ENCODE measurements at regions of chr4 and their contacts with region 1.

Region 1: GRCh38 chr4:169024762-169025161 is 14.7 kb upstream of the CBR4 start:
- DNase-seq: peak; percentile 21 to 43
- ATAC-seq: peak; percentile 90
- H3K4me3 ChIP-seq: no peak overlapping the region
- H3K27ac ChIP-seq: peak overlapping the region in 1 of 2 experiments; percentile 58; a peak in 2 of 6 replicates
- H3K4me1 ChIP-seq: no peaks in the 10 kb centered on the region; the same call in 2 of the 3 replicates
- CTCF ChIP-seq: peak; percentile 64
- EP300 ChIP-seq: no peak
- POLR2A ChIP-seq: no peak
- RAD21 ChIP-seq: peak; percentile 79 to 81

Region 2: DNA sequence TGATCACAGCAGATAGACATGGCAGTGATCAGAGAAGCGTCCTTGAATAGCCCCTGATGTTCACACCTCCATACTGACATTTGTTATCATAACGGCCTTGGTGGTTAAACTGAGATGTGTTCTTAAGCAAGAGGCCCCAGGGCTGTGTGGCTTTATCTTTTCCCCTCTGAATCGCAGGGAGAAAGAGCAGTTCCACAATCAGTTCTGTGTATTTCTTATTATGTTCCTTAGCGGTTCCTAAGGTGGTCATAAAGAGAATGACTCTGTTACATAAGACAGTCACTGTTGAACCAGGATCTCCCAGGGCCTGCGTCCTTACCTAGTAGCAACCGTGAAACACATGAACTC is 38.1 kb after region 1 on chr4:
- CTCF ChIA-PET with region 1: no interaction called
- POLR2A ChIA-PET with region 1: no interaction called
- DNase-seq: no peak
- ATAC-seq: no peak
- H3K4me3 ChIP-seq: no peak overlapping the region
- H3K27ac ChIP-seq: peak overlapping the region in 1 of 2 experiments; percentile 37; a peak in 1 of 6 replicates
- H3K4me1 ChIP-seq: peaks cover 15% of the 10 kb centered on the region
- CTCF ChIP-seq: no peak
- EP300 ChIP-seq: no peak
- POLR2A ChIP-seq: no peak
- RAD21 ChIP-seq: no peak

Region 3: DNA sequence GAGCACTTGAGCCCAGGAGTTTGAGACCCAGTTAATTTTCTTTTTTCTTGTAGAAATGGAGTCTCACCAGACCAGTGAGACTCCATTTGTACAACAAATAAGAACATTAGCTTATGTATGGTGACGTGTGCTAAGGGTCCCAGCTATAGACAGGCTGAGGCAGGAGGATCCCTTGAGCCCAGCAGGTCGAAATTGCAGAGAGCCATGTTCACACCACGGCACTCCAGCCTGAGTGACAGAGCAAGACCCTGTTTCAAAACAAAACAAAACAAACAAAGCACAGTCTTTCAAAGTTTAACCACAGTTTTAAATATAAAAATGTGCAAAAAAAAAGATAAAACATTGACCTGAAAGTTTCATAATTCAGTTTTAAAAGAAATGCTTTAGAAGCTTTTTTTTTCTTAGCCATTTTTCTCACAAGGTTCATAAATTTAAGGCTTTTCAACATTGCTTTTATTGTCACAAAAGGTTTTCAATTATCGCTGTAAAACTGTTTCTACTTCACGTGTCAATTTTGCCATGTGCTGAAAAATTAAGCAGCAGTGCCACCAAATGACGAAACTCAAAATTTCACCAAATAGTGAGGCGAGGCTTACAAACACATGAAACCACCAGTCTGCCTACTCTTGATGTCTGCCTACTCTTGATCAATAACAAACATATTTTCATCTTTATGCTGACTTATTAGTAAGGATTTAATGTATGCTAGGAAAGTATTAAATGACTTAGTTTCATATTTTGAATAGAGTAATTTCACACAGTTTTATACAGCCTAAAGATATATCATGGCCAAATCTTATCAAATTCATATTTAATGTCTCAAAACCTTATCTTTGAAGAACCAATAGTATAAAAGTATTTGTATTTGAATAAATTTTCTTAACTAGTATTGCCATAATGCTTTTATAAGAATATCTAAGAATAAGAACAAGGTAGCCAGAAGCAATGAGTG is 461.3 kb after region 1 on chr4:
- CTCF ChIA-PET with region 1: interaction called, 12 read pairs
- POLR2A ChIA-PET with region 1: no interaction called
- DNase-seq: peak; percentile 13 to 47
- ATAC-seq: peak in 1 of 2 experiments; percentile 69; a peak in 2 of 6 replicates
- H3K4me3 ChIP-seq: no peak overlapping the region
- H3K27ac ChIP-seq: peak overlapping the region in 1 of 2 experiments; percentile 45; a peak in 1 of 6 replicates
- H3K4me1 ChIP-seq: no peaks in the 10 kb centered on the region
- CTCF ChIP-seq: peak; percentile 74
- EP300 ChIP-seq: no peak
- POLR2A ChIP-seq: no peak
- RAD21 ChIP-seq: peak; percentile 85 to 89

Region 4: DNA sequence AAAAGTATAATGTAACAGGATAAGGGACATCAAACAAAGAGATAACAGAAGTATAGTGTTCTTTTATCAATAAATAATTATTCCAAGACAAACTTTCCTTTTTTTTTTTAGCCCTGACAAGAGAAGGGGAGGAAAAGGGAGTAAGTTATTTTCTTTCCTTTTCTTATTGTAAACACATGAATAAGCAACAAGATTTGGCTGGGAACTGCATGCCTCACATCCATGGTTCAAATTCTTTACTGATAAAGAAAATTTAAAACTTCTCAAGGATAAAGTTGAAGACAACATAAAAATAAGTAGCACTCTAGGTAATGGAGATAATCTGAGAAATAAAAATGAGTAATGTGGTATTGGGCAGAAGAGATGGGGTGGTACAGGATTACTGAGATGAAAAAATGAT is 516.0 kb after region 1 on chr4:
- CTCF ChIA-PET with region 1: interaction called, 10 read pairs
- POLR2A ChIA-PET with region 1: no interaction called
- DNase-seq: no peak
- ATAC-seq: no peak
- H3K4me3 ChIP-seq: no peak overlapping the region
- H3K27ac ChIP-seq: no peak overlapping the region
- H3K4me1 ChIP-seq: no peaks in the 10 kb centered on the region
- CTCF ChIP-seq: no peak
- EP300 ChIP-seq: no peak
- POLR2A ChIP-seq: no peak
- RAD21 ChIP-seq: no peak